ENCODE measurements at regions of chr12 and their contacts with region 1.

Region 1: GRCh38 chr12:92185052-92185451 is 39.4 kb upstream of the BTG1 start:
- DNase-seq: peak in 4 of 9 experiments; percentile 8 to 72 (median 32)
- ATAC-seq: peak; percentile 87
- H3K4me3 ChIP-seq: no peak overlapping the region
- H3K4me3 Mint-ChIP-seq: peak overlapping the region; percentile 62
- H3K27ac ChIP-seq: peak overlapping the region in 1 of 2 experiments; percentile 43
- H3K27ac Mint-ChIP-seq: peak overlapping the region; percentile 90
- H3K4me1 ChIP-seq: peaks cover 24% of the 10 kb centered on the region
- H3K4me1 Mint-ChIP-seq: peaks cover 47% of the 10 kb centered on the region
- H3K27me3 ChIP-seq: no peaks in the 10 kb centered on the region
- H3K27me3 Mint-ChIP-seq: no peaks in the 10 kb centered on the region
- CTCF ChIP-seq: no peak

Region 2: DNA sequence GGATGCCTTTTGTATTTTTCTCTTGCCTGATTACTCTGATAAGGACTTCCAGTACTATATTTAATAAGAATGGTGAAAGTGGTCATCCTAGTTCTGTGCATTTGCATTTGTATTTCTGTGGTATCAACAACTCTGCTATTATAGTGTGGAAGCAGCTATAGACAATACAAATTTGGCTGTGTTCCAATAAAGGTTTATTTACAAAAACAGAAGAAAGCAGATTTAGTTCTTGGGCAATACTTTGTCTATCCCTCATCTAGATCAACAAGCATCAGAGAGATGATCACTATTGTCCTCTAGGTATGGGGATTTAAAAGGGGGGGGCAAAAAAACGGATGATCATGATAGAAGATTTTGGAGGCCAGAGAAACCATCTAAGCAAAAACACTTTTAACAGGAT is 20.3 kb before region 1 on chr12:
- CTCF ChIA-PET with region 1: no interaction called
- POLR2A ChIA-PET with region 1: no interaction called
- intact Hi-C with region 1: loop called in 1 of 2 experiments (anchors 2 kb)
- DNase-seq: no peak
- ATAC-seq: no peak
- H3K4me3 ChIP-seq: no peak overlapping the region
- H3K4me3 Mint-ChIP-seq: no peak overlapping the region
- H3K27ac ChIP-seq: no peak overlapping the region
- H3K27ac Mint-ChIP-seq: no peak overlapping the region
- H3K4me1 ChIP-seq: peaks cover 25% of the 10 kb centered on the region
- H3K4me1 Mint-ChIP-seq: peaks cover 33% of the 10 kb centered on the region
- H3K27me3 ChIP-seq: no peaks in the 10 kb centered on the region
- H3K27me3 Mint-ChIP-seq: no peaks in the 10 kb centered on the region
- CTCF ChIP-seq: no peak

Region 3: GRCh38 chr12:92170050-92170449 is 15.0 kb before region 1 on chr12:
- CTCF ChIA-PET with region 1: no interaction called
- POLR2A ChIA-PET with region 1: interaction called, 3 read pairs
- intact Hi-C with region 1: loop called (anchors 2 kb)
- DNase-seq: no peak
- ATAC-seq: no peak
- H3K4me3 ChIP-seq: no peak overlapping the region
- H3K4me3 Mint-ChIP-seq: no peak overlapping the region
- H3K27ac ChIP-seq: no peak overlapping the region
- H3K27ac Mint-ChIP-seq: no peak overlapping the region
- H3K4me1 ChIP-seq: no peaks in the 10 kb centered on the region
- H3K4me1 Mint-ChIP-seq: peaks cover 16% of the 10 kb centered on the region
- H3K27me3 ChIP-seq: no peaks in the 10 kb centered on the region
- H3K27me3 Mint-ChIP-seq: no peaks in the 10 kb centered on the region
- CTCF ChIP-seq: no peak

Region 4: GRCh38 chr12:92208613-92209121 is 23.6 kb after region 1 on chr12:
- CTCF ChIA-PET with region 1: no interaction called
- POLR2A ChIA-PET with region 1: no interaction called
- intact Hi-C with region 1: loop called in 1 of 2 experiments (anchors 1 kb)
- DNase-seq: peak in 7 of 9 experiments; percentile 25 to 74 (median 32)
- ATAC-seq: peak; percentile 83
- H3K4me3 ChIP-seq: peak overlapping the region; percentile 28 to 32
- H3K4me3 Mint-ChIP-seq: peak overlapping the region; percentile 67
- H3K27ac ChIP-seq: peak overlapping the region; percentile 26 to 34
- H3K27ac Mint-ChIP-seq: peak overlapping the region; percentile 92
- H3K4me1 ChIP-seq: peaks cover 27% of the 10 kb centered on the region
- H3K4me1 Mint-ChIP-seq: peaks cover 40% of the 10 kb centered on the region
- H3K27me3 ChIP-seq: no peaks in the 10 kb centered on the region
- H3K27me3 Mint-ChIP-seq: no peaks in the 10 kb centered on the region
- CTCF ChIP-seq: no peak

Region 5: DNA sequence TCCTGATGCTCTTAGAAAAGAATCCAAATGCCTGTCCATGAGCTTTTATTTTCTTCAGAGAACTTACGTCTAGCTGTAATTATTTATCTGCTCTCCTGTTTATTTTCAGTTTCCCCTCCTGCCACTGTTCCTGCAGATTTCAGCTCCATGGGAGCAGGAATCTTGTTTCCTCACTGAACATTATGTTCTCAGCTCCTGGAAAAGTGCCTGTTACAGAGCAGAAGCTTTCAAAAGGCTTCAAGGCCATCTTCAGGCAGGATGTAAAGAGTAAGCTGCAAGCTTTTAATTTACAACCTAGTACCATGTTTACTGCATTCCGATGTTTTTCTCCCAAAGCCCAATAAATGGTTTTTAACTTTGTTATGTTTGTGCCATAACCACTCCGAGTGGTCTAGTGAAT is 59.0 kb after region 1 on chr12:
- CTCF ChIA-PET with region 1: no interaction called
- POLR2A ChIA-PET with region 1: no interaction called
- intact Hi-C with region 1: no loop called
- DNase-seq: no peak
- ATAC-seq: no peak
- H3K4me3 ChIP-seq: no peak overlapping the region
- H3K4me3 Mint-ChIP-seq: no peak overlapping the region
- H3K27ac ChIP-seq: no peak overlapping the region
- H3K27ac Mint-ChIP-seq: peak overlapping the region; percentile 52
- H3K4me1 ChIP-seq: no peaks in the 10 kb centered on the region
- H3K4me1 Mint-ChIP-seq: peaks cover 15% of the 10 kb centered on the region
- H3K27me3 ChIP-seq: no peaks in the 10 kb centered on the region
- H3K27me3 Mint-ChIP-seq: no peaks in the 10 kb centered on the region
- CTCF ChIP-seq: no peak

Region 6: DNA sequence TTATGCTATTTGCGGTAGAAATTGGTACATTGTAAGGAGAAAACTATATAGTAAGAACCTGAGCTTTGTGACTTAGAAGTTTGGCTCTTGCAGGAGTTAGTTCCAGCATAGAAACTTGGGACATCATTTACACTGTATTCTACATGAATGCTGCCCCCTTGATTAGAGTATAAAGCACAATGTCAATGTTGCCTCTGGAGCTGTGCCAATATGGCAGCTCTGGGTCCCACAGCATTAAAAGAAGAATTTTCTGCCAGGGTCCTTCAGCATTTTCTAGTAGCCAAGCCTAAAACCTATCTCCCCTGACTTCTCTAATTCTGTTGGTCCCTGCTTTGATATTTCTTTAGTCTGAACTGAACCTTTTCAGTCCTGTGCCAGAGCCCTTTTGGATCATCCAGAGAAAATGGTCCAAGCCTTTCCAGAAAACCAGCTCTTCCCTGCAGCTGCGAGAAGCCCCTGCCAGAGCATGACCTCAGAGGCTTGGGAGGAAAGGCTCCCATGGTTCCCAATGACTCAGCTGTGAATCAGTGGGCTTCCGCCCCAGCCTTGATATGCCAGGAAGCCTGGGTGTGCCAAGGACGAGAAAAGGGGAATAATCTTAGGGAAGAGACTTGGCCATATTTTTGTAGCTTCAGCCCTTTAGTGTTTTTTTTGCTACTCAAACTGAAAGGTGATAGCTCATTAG is 560.9 kb after region 1 on chr12:
- CTCF ChIA-PET with region 1: no interaction called
- POLR2A ChIA-PET with region 1: no interaction called
- intact Hi-C with region 1: no loop called
- DNase-seq: no peak
- ATAC-seq: no peak
- H3K4me3 ChIP-seq: no peak overlapping the region
- H3K4me3 Mint-ChIP-seq: no peak overlapping the region
- H3K27ac ChIP-seq: no peak overlapping the region
- H3K27ac Mint-ChIP-seq: no peak overlapping the region
- H3K4me1 ChIP-seq: no peaks in the 10 kb centered on the region
- H3K4me1 Mint-ChIP-seq: no peaks in the 10 kb centered on the region
- H3K27me3 ChIP-seq: no peaks in the 10 kb centered on the region
- H3K27me3 Mint-ChIP-seq: peaks cover 8% of the 10 kb centered on the region
- CTCF ChIP-seq: no peak